PC-3 (cell line): ENCODE measurements at regions of chr13 and their contacts with region 1.

Region 1: GRCh38 chr13:50081679-50082425 is 66.6 kb downstream of the KCNRG start:
- DNase-seq: peak; percentile 95
- ATAC-seq: peak; percentile 70
- H3K4me3 ChIP-seq: peak overlapping the region; percentile 95
- H3K27ac ChIP-seq: peak overlapping the region; percentile 92
- H3K4me1 ChIP-seq: peaks cover 23% of the 10 kb centered on the region
- H3K27me3 ChIP-seq: no peaks in the 10 kb centered on the region
- CTCF ChIP-seq: peak; percentile 16; the same call in 1 of the 2 replicates

Region 2: DNA sequence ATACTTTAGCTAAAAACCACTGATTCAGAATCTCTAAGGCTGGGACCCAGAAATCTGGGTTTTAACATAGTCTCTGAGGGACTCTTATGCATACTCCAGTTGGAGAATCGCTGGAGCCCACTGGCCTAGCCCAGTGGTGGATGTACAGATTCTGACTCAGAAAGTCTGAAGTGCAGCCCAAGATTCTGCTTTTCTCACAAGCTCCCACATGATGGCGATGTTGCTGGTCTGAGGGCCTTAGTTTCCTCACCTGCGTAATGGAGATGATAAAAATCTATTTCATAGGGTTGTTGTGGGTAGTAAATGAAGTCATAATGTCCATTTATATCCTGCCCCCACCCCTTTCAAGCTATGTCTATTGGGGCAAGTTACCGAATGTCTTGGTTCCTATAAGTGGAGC is 841.8 kb before region 1 on chr13:
- CTCF ChIA-PET with region 1: no interaction called
- POLR2A ChIA-PET with region 1: no interaction called
- intact Hi-C with region 1: no loop called
- DNase-seq: peak; percentile 52
- ATAC-seq: peak; percentile 70
- H3K4me3 ChIP-seq: no peak overlapping the region
- H3K27ac ChIP-seq: no peak overlapping the region
- H3K4me1 ChIP-seq: no peaks in the 10 kb centered on the region
- H3K27me3 ChIP-seq: no peaks in the 10 kb centered on the region
- CTCF ChIP-seq: peak; percentile 59

Region 3: GRCh38 chr13:49936085-49936940 is 145.5 kb before region 1 on chr13 and contains the start of gene SPRYD7:
- CTCF ChIA-PET with region 1: interaction called, 7 read pairs
- POLR2A ChIA-PET with region 1: interaction called, 17 read pairs
- intact Hi-C with region 1: loop called (anchors 5 kb)
- DNase-seq: peak; percentile 93
- ATAC-seq: peak; percentile 94
- H3K4me3 ChIP-seq: peak within 1 kb of the TSS; percentile 97
- H3K27ac ChIP-seq: peak within 1 kb of the TSS; percentile 22
- H3K4me1 ChIP-seq: peaks cover 15% of the 10 kb centered on the region
- H3K27me3 ChIP-seq: no peaks in the 10 kb centered on the region
- CTCF ChIP-seq: peak; percentile 72
- total RNA-seq, gene SPRYD7: 6.3 and 6.8 TPM in 2 replicates

Region 4: DNA sequence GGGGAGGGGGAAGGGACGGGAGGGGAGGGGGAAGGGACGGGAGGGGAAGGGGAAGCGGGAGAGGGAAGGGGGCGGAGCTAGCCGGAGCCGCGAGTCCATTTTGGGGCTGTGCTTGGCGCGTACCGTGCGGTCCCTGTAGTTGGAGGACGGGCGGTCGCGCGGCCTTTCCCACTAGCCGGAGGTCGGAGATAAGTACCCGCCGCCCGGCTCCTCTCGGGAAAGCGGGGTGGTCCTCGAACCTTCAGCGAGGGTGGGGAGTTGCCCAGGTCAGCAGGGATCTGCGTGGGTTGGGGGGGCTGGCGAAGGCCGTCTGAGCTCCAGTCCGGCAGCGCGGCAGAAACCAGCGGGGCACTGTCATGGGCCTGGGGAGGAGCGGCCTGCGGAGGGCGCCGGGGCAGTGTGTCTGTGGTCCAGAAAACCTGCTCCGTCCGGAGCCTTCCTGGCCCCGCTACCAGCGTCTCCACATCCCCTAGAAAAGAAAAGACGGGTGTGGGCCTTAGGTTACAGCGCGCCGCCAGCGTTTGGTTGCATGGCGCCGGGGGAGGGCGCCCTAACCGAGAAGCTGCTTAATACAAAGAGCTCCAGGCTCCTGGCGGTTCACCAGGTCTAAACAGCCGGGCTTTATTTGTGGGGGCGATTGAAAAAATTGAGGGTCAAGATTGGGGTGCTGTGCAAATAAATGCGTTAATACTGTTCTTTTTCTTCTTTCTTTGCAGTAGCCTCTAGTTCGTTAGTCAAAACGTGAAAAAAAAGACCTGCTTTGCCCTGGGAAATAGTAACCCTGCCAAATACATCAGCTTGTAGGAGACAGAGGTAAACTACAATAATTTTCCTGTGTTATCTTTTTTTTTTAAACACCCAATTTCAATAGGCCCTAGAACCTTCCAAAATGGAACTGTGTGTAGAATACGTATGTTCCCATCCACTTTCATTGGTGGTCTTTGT is 84.6 kb before region 1 on chr13 and contains the start of gene TRIM13:
- CTCF ChIA-PET with region 1: interaction called, 12 read pairs
- POLR2A ChIA-PET with region 1: interaction called, 6 read pairs
- intact Hi-C with region 1: loop called (anchors 1 kb)
- DNase-seq: peak; percentile 79
- ATAC-seq: peak; percentile 80
- H3K4me3 ChIP-seq: peak within 1 kb of the TSS; percentile 95
- H3K27ac ChIP-seq: peak within 1 kb of the TSS; percentile 89
- H3K4me1 ChIP-seq: peaks cover 23% of the 10 kb centered on the region
- H3K27me3 ChIP-seq: no peaks in the 10 kb centered on the region
- CTCF ChIP-seq: peak; percentile 77
- total RNA-seq, gene TRIM13: 6.7 and 13.7 TPM in 2 replicates

Region 5: DNA sequence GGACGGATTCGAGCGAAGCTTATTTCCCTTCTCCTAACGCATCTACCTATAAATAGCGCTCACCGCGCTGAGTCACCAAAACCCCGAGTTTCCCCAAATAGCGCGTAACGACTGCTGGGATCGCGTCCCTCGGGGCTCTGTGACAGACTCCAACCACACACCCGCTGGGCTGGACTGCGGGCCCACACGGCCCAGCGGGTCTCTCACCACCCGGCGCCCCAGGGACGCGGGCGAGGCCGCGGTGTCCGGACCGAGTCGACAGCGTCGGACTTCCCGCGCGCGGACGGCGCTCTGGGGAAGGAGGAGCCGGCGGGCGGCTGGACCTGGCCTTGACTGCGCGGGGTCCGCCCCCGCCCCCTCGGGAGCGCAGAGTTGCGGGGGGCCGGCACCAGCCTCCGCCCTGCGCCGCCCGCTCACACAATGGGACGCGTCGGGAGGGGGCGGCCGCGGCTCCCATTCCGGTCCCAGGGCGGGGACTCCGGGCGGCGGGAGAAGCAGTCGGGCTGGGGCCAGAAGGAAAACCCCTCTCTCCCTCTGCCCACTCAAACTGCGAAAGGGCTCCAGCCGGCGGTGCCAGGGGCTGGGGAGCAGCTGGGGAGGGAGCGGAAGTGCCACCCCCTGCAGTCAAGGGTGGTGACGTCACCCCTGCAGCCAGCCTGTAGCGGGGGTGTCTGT is 42.1 kb after region 1 on chr13:
- CTCF ChIA-PET with region 1: no interaction called
- POLR2A ChIA-PET with region 1: interaction called, 4 read pairs
- intact Hi-C with region 1: loop called (anchors 1 kb)
- DNase-seq: peak; percentile 84
- ATAC-seq: peak; percentile 68
- H3K4me3 ChIP-seq: peak overlapping the region; percentile 93
- H3K27ac ChIP-seq: peak overlapping the region; percentile 87
- H3K4me1 ChIP-seq: peaks cover 10% of the 10 kb centered on the region; the same call in 1 of the 2 replicates
- H3K27me3 ChIP-seq: no peaks in the 10 kb centered on the region
- CTCF ChIP-seq: no peak

Region 6: GRCh38 chr13:50244713-50245574 is 163.1 kb after region 1 on chr13:
- CTCF ChIA-PET with region 1: no interaction called
- POLR2A ChIA-PET with region 1: no interaction called
- intact Hi-C with region 1: loop called (anchors 10 kb)
- DNase-seq: peak; percentile 90
- ATAC-seq: peak; percentile 98
- H3K4me3 ChIP-seq: peak overlapping the region; percentile 29; the same call in 1 of the 2 replicates
- H3K27ac ChIP-seq: peak overlapping the region; percentile 91
- H3K4me1 ChIP-seq: peaks cover 26% of the 10 kb centered on the region
- H3K27me3 ChIP-seq: no peaks in the 10 kb centered on the region
- CTCF ChIP-seq: no peak

Region 7: GRCh38 chr13:50531917-50532899 is 450.4 kb after region 1 on chr13:
- CTCF ChIA-PET with region 1: no interaction called
- POLR2A ChIA-PET with region 1: no interaction called
- intact Hi-C with region 1: loop called (anchors 2 kb)
- DNase-seq: peak; percentile 55
- ATAC-seq: no peak; the same call in 1 of the 2 replicates
- H3K4me3 ChIP-seq: no peak overlapping the region
- H3K27ac ChIP-seq: no peak overlapping the region
- H3K4me1 ChIP-seq: 0 out of 2 replicates have a peak, but pooled peaks cover 10% of the 10 kb centered on the region
- H3K27me3 ChIP-seq: no peaks in the 10 kb centered on the region
- CTCF ChIP-seq: peak; percentile 64

Region 8: DNA sequence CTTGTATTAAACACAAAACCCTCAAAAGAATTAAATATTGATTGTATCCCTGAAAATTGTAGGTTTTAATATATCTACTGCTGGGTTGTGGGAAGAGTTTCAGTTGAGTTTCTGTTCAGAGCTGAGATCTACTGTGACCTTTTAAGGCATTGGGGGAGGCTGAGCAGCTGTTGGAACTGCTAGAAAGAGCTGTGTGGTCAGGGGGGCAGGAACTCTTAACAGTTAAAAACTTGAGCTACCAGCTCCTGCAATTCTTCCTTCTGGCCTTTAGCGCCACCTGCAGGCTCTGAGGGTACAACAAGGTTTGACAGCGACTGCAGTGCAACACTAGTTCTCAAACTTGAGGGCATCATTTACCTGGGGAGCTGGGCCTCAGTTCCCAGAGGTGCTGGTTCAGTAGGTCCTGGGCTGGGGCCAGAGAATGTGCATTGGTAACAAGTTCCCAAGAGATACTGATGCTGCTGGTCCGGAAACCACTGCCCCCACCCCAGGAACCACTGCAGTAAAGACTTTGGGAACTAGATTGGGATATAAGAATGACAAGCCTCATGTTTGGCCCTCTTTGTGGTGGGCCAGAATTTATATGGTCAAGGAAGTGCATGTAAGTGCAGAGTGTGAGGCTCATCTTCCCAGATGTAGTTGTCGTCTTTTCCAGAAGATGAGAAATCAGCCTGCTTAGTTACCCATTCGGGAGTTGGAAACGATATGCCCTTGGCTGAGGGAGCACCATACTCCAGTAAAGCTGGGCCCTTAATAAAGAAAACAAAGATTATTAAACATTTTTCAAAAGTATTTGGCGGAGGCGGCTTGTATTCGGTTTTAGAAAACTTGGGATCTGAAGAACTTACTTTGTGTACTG is 830.3 kb after region 1 on chr13:
- CTCF ChIA-PET with region 1: interaction called, 5 read pairs
- POLR2A ChIA-PET with region 1: no interaction called
- intact Hi-C with region 1: loop called (anchors 1 kb)
- DNase-seq: peak; percentile 86
- ATAC-seq: peak; percentile 9; the same call in 1 of the 2 replicates
- H3K4me3 ChIP-seq: peak overlapping the region; percentile 84; the same call in 1 of the 2 replicates
- H3K27ac ChIP-seq: no peak overlapping the region
- H3K4me1 ChIP-seq: peaks cover 24% of the 10 kb centered on the region
- H3K27me3 ChIP-seq: no peaks in the 10 kb centered on the region
- CTCF ChIP-seq: peak; percentile 82